ENCODE measurements at regions of chr22 and their contacts with region 1.

Region 1: DNA sequence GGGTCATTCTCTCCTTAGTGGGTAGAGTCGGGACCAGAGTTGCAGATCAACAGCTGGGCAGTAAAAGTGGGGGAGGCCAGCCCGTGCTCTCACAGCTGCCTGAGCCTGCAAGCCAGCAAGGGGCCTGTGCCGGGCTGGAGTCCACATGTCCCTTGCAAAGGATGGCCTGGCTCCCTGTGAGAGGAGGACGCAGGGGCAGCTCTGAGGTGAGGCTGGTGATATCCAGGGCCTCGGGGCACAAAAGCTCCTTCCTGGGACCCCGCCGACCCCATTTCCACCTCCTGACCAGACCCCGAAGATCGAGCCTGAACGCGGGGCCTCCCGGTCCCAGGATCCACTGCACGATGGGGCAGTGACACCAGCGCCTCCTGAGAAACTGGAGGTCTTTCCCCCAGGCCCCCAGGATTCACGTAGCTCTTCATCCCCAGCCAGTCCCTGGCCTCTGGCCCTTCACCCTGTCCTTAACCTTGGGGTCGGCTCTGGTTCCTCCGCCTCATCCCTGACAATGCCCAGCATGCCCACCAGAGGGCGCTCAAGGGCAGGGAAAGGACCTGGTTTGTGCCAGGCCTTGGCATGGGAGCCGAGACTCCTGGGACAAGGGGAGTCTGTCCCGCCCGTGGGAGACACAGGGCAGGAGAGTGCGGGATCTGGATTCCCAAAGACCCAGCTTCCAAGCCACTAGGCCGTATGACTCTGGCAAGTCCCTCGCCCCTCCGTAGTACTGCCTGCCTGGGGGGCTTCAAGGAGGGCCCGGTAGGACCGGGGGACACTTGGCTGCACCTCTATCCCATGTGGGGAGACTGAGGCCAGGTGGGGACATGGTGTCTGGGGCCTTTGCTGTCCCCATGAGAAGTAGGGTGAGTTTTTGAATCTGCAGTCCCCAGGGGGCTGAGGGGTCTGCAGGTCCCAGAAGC is 17.8 kb upstream of the WNT7B start:
- DNase-seq: peak; percentile 56 to 71 (median 61)
- H3K4me3 ChIP-seq: no peak overlapping the region
- H3K4me3 Mint-ChIP-seq: no peak overlapping the region
- H3K27ac ChIP-seq: no peak overlapping the region
- H3K27ac Mint-ChIP-seq: no peak overlapping the region
- H3K4me1 ChIP-seq: peaks cover 5% of the 10 kb centered on the region
- H3K4me1 Mint-ChIP-seq: peaks cover 0 to 11% (median 5%) of the 10 kb centered on the region in 4 donors
- H3K27me3 ChIP-seq: no peaks in the 10 kb centered on the region
- H3K27me3 Mint-ChIP-seq: peaks cover 1 to 6% of the 10 kb centered on the region in 2 donors

Region 2: DNA sequence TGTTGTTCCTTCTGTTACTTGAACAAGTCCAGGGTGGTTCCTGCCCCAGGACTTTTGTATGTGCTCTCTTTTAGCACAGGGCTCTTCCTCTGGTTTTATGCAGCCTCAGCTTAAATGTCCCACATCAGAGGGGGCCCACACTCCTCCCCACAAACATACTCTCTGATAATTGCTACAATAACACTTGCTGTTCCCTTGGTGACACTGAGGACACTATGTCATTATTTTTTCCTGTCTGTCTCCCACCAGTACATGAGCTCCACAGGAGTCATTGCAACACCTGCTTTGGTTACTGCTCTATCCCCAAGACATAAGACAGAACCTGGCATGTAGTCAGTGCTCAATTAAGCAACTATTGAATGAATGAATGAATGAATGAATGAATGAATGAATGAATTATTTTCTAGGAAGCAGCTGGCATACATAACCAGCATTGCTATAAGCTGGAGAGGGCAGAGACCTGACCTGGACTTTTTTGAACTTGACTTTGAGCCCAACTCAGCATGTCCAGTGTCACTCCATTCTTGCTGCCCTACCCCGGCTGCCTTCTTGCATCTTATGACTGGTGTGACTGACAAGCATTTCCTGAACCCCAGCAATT is 10.3 kb before region 1 on chr22:
- CTCF ChIA-PET with region 1: interaction called, 12 read pairs
- POLR2A ChIA-PET with region 1: no interaction called
- intact Hi-C with region 1: no loop called
- DNase-seq: no peak
- H3K4me3 ChIP-seq: no peak overlapping the region
- H3K4me3 Mint-ChIP-seq: no peak overlapping the region
- H3K27ac ChIP-seq: no peak overlapping the region
- H3K27ac Mint-ChIP-seq: peak overlapping the region in 1 of 7 donors; percentile 27
- H3K4me1 ChIP-seq: peaks cover 1% of the 10 kb centered on the region
- H3K4me1 Mint-ChIP-seq: peaks cover 0 to 3% (median 0%) of the 10 kb centered on the region in 4 donors
- H3K27me3 ChIP-seq: no peaks in the 10 kb centered on the region
- H3K27me3 Mint-ChIP-seq: peaks cover 0 to 4% of the 10 kb centered on the region in 2 donors